Naive thymus-derived CD4-positive, alpha-beta T cell (primary cell): ENCODE measurements at regions of chr4 and their contacts with region 1.

Region 1: DNA sequence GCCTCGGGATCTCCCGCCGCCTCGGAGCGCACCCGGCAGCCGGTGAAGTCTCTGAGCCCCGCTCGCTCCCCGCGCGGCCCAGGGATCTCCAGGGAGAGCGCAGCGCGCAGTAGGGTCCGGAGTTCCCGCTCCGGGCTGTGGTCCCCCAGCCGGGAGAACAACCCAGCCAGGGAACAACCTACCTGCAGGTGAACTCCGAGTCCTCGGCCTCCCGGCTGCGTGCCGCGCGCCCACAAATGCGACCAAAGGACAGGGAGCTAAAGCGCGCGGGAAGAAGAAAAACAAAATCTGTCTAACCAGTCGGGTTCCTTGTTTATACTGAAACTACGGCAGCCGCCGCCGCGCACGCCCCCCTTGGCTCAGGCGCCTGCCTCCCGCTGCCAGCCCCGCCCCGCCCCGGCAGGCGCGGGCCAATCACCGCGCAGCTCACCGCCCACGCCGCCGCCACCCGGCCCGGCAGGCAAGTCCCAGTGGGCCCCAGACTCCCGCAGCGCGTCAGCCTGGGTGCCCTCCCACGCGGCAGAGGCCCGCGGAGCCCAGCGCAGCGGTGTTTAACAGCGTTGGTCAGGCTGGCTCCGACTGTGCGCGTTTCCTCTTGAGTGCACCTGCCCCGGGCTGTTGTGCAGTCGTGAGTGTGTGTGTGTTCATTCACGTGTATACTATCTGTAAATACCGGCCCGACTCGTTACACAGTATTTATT is at the start of gene RASGEF1B:
- DNase-seq: peak; percentile 95 to 98 (median 97)
- ATAC-seq: peak; percentile 93
- H3K4me3 ChIP-seq: peak within 1 kb of the TSS; percentile 96
- H3K4me3 Mint-ChIP-seq: peak within 1 kb of the TSS; percentile 91 to 98 (median 95)
- H3K27ac ChIP-seq: peak within 1 kb of the TSS; percentile 96
- H3K27ac Mint-ChIP-seq: peak within 1 kb of the TSS; percentile 87 to 100 (median 98)
- H3K4me1 ChIP-seq: peaks cover 13 to 18% of the 10 kb centered on the region in 2 donors
- H3K4me1 Mint-ChIP-seq: peaks cover 31 to 52% (median 40%) of the 10 kb centered on the region in 7 donors
- H3K27me3 ChIP-seq: no peaks in the 10 kb centered on the region
- H3K27me3 Mint-ChIP-seq: peaks cover 0 to 14% (median 0%) of the 10 kb centered on the region in 5 donors
- total RNA-seq, gene RASGEF1B: 1.1 to 82.5 (median 11.5) TPM

Region 2: GRCh38 chr4:81485310-81485980 is 13.7 kb after region 1 on chr4:
- CTCF ChIA-PET with region 1: interaction called, 29 read pairs
- POLR2A ChIA-PET with region 1: interaction called, 59 read pairs
- intact Hi-C with region 1: no loop called
- DNase-seq: no peak
- ATAC-seq: no peak
- H3K4me3 ChIP-seq: no peak overlapping the region
- H3K4me3 Mint-ChIP-seq: no peak overlapping the region
- H3K27ac ChIP-seq: no peak overlapping the region
- H3K27ac Mint-ChIP-seq: peak overlapping the region in 1 of 9 donors; percentile 36
- H3K4me1 ChIP-seq: peaks cover 2 to 3% of the 10 kb centered on the region in 2 donors
- H3K4me1 Mint-ChIP-seq: peaks cover under 1 to 10% (median 5%) of the 10 kb centered on the region in 7 donors
- H3K27me3 ChIP-seq: no peaks in the 10 kb centered on the region
- H3K27me3 Mint-ChIP-seq: peaks cover 0 to 4% (median 0%) of the 10 kb centered on the region in 5 donors

Region 3: DNA sequence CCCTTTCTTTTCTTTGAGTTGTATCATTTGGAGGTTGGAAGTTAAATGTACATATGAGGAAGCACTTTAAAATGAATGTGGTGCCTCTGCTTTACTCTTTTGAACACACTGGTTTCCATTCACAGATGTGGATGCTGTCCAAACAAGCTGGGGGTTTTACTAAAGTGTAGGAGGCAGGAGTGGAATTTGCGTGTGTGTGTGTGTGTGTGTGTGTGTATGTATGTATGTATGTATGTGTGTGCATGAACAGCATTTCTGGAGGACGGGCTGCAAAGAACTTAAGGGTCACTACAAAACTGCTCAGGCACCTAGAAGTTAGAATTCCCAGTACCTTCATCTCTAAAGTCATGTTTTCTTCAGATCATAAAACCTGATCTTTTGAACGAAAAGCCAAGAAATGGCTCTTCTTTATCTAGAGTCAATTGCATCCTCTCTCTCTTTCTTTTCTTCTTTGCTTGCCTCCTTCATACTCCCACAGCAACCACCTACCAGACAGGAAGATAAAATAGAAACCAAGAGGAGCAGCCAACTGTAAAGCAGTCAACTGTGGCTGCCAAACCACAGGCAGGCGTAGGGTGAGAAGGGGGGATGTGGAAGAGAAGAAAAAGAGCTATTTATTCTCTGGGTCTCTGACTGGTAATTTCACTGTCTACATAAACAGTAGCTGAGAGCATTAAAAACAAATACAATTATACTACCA is 177.0 kb after region 1 on chr4:
- CTCF ChIA-PET with region 1: no interaction called
- POLR2A ChIA-PET with region 1: no interaction called
- intact Hi-C with region 1: loop called in 1 of 2 experiments (anchors 2 kb)
- DNase-seq: peak in 8 of 9 donors; percentile 45 to 71 (median 54)
- ATAC-seq: peak; percentile 93
- H3K4me3 ChIP-seq: no peak overlapping the region
- H3K4me3 Mint-ChIP-seq: peak overlapping the region in 9 of 10 donors; percentile 45 to 71 (median 54)
- H3K27ac ChIP-seq: peak overlapping the region; percentile 0
- H3K27ac Mint-ChIP-seq: peak overlapping the region; percentile 33 to 80 (median 64)
- H3K4me1 ChIP-seq: peaks cover 12 to 16% of the 10 kb centered on the region in 2 donors
- H3K4me1 Mint-ChIP-seq: peaks cover 25 to 59% (median 48%) of the 10 kb centered on the region in 7 donors
- H3K27me3 ChIP-seq: no peaks in the 10 kb centered on the region
- H3K27me3 Mint-ChIP-seq: no peaks in the 10 kb centered on the region

Region 4: GRCh38 chr4:81844717-81845116 is 373.0 kb after region 1 on chr4:
- CTCF ChIA-PET with region 1: interaction called, 99 read pairs
- POLR2A ChIA-PET with region 1: interaction called, 6 read pairs
- intact Hi-C with region 1: loop called (anchors 1 kb)
- DNase-seq: peak; percentile 9 to 75 (median 62)
- ATAC-seq: peak; percentile 96
- H3K4me3 ChIP-seq: no peak overlapping the region
- H3K4me3 Mint-ChIP-seq: no peak overlapping the region
- H3K27ac ChIP-seq: no peak overlapping the region
- H3K27ac Mint-ChIP-seq: no peak overlapping the region
- H3K4me1 ChIP-seq: no peaks in the 10 kb centered on the region
- H3K4me1 Mint-ChIP-seq: no peaks in the 10 kb centered on the region
- H3K27me3 ChIP-seq: no peaks in the 10 kb centered on the region
- H3K27me3 Mint-ChIP-seq: peaks cover 0 to 3% (median 0%) of the 10 kb centered on the region in 5 donors

Region 5: GRCh38 chr4:82097504-82097903 is 625.8 kb after region 1 on chr4:
- CTCF ChIA-PET with region 1: no interaction called
- POLR2A ChIA-PET with region 1: no interaction called
- intact Hi-C with region 1: no loop called
- DNase-seq: no peak
- ATAC-seq: no peak
- H3K4me3 ChIP-seq: no peak overlapping the region
- H3K4me3 Mint-ChIP-seq: no peak overlapping the region
- H3K27ac ChIP-seq: no peak overlapping the region
- H3K27ac Mint-ChIP-seq: no peak overlapping the region
- H3K4me1 ChIP-seq: no peaks in the 10 kb centered on the region
- H3K4me1 Mint-ChIP-seq: no peaks in the 10 kb centered on the region
- H3K27me3 ChIP-seq: no peaks in the 10 kb centered on the region
- H3K27me3 Mint-ChIP-seq: peaks cover 0 to 8% (median 0%) of the 10 kb centered on the region in 5 donors

Region 6: DNA sequence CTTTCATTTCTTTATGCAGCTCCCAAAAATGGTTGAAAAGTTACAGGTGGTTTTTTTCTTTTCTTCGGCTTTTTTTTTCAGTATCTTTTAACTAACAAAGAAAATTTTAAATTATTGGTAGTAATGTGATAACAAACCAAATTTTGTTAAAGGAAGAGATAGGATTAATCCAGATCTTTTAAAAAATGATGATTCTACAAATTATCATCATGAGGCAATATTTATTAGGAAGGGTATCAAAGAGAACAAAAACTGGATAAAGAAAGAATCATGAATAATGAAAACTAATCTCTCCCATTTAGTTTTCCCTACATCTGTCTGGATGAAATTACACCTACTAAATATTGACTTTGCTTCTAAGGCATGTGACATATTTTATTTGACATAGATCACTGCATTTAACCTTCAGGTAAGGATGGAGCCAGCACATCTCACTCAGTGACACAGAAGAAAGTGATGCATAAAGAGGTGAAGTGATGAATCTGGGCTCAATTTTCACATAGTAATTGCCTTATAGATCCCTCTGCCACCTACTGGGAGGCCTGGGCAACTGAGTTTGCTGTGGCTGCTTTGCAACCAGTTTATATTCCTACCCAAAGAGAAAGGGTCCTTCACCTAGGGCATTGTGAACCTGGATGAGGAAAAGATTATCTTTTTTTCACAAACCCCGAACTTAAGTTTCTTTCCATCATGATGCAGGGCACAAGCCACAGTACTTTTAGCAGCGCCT is 746.4 kb after region 1 on chr4:
- CTCF ChIA-PET with region 1: interaction called, 3 read pairs
- POLR2A ChIA-PET with region 1: interaction called, 3 read pairs
- intact Hi-C with region 1: loop called in 1 of 2 experiments (anchors 1 kb)
- DNase-seq: peak in 7 of 9 donors; percentile 2 to 36 (median 14)
- ATAC-seq: peak; percentile 50
- H3K4me3 ChIP-seq: no peak overlapping the region
- H3K4me3 Mint-ChIP-seq: no peak overlapping the region
- H3K27ac ChIP-seq: no peak overlapping the region
- H3K27ac Mint-ChIP-seq: no peak overlapping the region
- H3K4me1 ChIP-seq: peaks cover 10 to 12% of the 10 kb centered on the region in 2 donors
- H3K4me1 Mint-ChIP-seq: peaks cover 9 to 53% (median 38%) of the 10 kb centered on the region in 7 donors
- H3K27me3 ChIP-seq: no peaks in the 10 kb centered on the region
- H3K27me3 Mint-ChIP-seq: peaks cover 0 to 14% (median 0%) of the 10 kb centered on the region in 5 donors

Region 7: GRCh38 chr4:82428969-82429727 is 957.4 kb after region 1 on chr4:
- CTCF ChIA-PET with region 1: no interaction called
- POLR2A ChIA-PET with region 1: interaction called, 8 read pairs
- intact Hi-C with region 1: loop called (anchors 1 kb)
- DNase-seq: peak; percentile 90 to 99 (median 94)
- ATAC-seq: peak; percentile 79
- H3K4me3 ChIP-seq: peak overlapping the region; percentile 96
- H3K4me3 Mint-ChIP-seq: peak overlapping the region; percentile 98 to 100 (median 99)
- H3K27ac ChIP-seq: peak overlapping the region; percentile 99
- H3K27ac Mint-ChIP-seq: peak overlapping the region; percentile 98 to 100 (median 99)
- H3K4me1 ChIP-seq: peaks cover 28 to 39% of the 10 kb centered on the region in 2 donors
- H3K4me1 Mint-ChIP-seq: peaks cover 40 to 81% (median 69%) of the 10 kb centered on the region in 7 donors
- H3K27me3 ChIP-seq: no peaks in the 10 kb centered on the region
- H3K27me3 Mint-ChIP-seq: peaks cover 0 to 2% (median 0%) of the 10 kb centered on the region in 5 donors

Region 8: GRCh38 chr4:82989575-82990429 is 1518.1 kb after region 1 on chr4:
- CTCF ChIA-PET with region 1: no interaction called
- POLR2A ChIA-PET with region 1: no interaction called
- intact Hi-C with region 1: no loop called
- DNase-seq: peak in 5 of 9 donors; percentile 4 to 26 (median 11)
- ATAC-seq: peak; percentile 75
- H3K4me3 ChIP-seq: peak overlapping the region; percentile 9
- H3K4me3 Mint-ChIP-seq: peak overlapping the region; percentile 33 to 72 (median 60)
- H3K27ac ChIP-seq: peak overlapping the region; percentile 38
- H3K27ac Mint-ChIP-seq: peak overlapping the region; percentile 8 to 92 (median 59)
- H3K4me1 ChIP-seq: peaks cover 5 to 9% of the 10 kb centered on the region in 2 donors
- H3K4me1 Mint-ChIP-seq: peaks cover 14 to 37% (median 25%) of the 10 kb centered on the region in 7 donors
- H3K27me3 ChIP-seq: no peaks in the 10 kb centered on the region
- H3K27me3 Mint-ChIP-seq: no peaks in the 10 kb centered on the region